Sciatic nerve (tissue), 2 donors: ENCODE measurements at regions of chr11 and their contacts with region 1.

Region 1: GRCh38 chr11:21037850-21038249 is 368.5 kb downstream of the NELL1 start:
- DNase-seq: no peak
- ATAC-seq: no peak

Region 2: DNA sequence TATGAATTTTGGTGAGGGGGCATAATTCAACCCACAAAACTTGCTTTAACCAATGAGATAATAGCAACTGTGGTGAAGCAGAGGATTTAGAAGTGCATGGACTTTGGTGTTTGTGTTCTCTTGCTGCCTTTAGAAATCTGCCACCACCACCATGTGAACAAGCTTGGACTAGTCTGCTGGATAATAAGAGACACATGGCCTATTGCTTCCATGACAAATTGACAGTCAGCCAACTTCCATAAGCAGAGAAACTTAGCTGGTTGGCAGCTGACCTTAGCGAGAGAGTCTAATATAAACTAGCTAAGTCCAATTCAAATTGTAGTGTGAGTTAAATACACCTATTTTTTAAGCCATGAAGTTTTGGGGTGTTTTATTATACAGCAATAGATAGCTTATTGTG is 673.0 kb after region 1 on chr11:
- intact Hi-C with region 1: loop called (anchors 10 kb)
- DNase-seq: no peak
- ATAC-seq: no peak